ENCODE measurements at regions of chr3 and their contacts with region 1.

Region 1: GRCh38 chr3:45593708-45594609 is 592 bp upstream of the LIMD1 start:
- DNase-seq: peak; percentile 59 to 80 (median 65)
- H3K4me3 ChIP-seq: peak overlapping the region; percentile 56
- H3K27ac ChIP-seq: peak overlapping the region; percentile 6 to 78
- H3K4me1 ChIP-seq: peaks cover 29% of the 10 kb centered on the region
- H3K27me3 ChIP-seq: no peaks in the 10 kb centered on the region
- CTCF ChIP-seq: peak in 1 of 3 donors; percentile 14
- EP300 ChIP-seq: no peak
- POLR2A ChIP-seq: no peak

Region 2: GRCh38 chr3:45516829-45517228 is 77.1 kb before region 1 on chr3:
- intact Hi-C with region 1: loop called in 2 of 4 experiments (anchors 5 to 10 kb)
- DNase-seq: no peak
- H3K4me3 ChIP-seq: no peak overlapping the region
- H3K27ac ChIP-seq: no peak overlapping the region
- H3K4me1 ChIP-seq: no peaks in the 10 kb centered on the region
- H3K27me3 ChIP-seq: no peaks in the 10 kb centered on the region
- CTCF ChIP-seq: no peak
- EP300 ChIP-seq: no peak
- POLR2A ChIP-seq: no peak